Activated CD4-positive, alpha-beta T cell treated with anti-CD3 and anti-CD28 coated beads for 36 hours (primary cell): ENCODE measurements at regions of chr14 and their contacts with region 1.

Region 1: GRCh38 chr14:78254911-78255461 is 84.8 kb downstream of the NRXN3 start:
- DNase-seq: peak; percentile 67
- ATAC-seq: peak; percentile 55
- H3K4me3 Mint-ChIP-seq: no peak overlapping the region
- H3K27ac Mint-ChIP-seq: no peak overlapping the region
- H3K4me1 Mint-ChIP-seq: peaks cover 16% of the 10 kb centered on the region
- H3K27me3 Mint-ChIP-seq: peaks cover 16% of the 10 kb centered on the region

Region 2: DNA sequence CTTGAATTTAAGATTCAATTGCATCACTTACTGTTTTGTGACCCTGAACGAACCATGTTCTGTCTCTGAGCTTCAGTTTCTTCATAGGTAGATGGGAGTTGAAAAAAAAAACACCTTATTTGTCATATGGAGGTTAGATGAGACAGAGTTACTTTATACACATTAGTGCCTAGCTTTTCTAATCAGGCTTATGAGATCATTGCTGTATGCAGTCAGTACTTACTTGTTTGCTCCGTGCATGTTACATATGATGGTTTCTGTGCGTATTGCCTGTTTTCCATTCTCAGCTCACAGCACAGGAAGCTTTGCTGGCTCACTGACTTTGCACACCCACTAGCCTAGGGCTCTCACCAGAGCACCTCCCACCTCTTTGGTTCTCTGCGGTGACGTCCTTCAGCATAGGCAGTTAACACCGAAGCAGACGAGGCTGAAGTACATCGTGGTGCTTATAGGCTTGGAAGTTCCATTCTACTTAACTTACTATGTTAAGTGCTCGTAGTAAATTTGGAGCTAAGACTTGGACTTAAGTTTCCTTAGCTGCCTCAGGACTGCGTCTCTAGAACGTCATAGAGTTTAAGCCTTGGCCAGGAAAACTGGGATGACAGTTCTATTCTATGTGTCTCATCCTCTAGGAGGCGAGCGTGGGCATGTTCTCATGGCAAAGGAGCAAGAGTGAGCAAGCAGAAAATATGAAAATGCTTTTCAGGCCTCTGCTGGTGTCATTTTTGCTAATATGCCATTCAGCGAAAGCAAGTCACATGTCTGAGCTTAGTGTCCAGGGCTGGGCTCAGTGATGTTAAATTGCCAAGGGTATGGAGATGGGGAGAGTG is 27.5 kb before region 1 on chr14:
- CTCF ChIA-PET with region 1: no interaction called
- POLR2A ChIA-PET with region 1: no interaction called
- intact Hi-C with region 1: loop called in 1 of 2 experiments (anchors 1 kb)
- DNase-seq: no peak
- ATAC-seq: no peak
- H3K4me3 Mint-ChIP-seq: no peak overlapping the region
- H3K27ac Mint-ChIP-seq: no peak overlapping the region
- H3K4me1 Mint-ChIP-seq: peaks cover 11% of the 10 kb centered on the region
- H3K27me3 Mint-ChIP-seq: peaks cover 15% of the 10 kb centered on the region

Region 3: GRCh38 chr14:78278464-78279250 is 23.7 kb after region 1 on chr14:
- CTCF ChIA-PET with region 1: no interaction called
- POLR2A ChIA-PET with region 1: no interaction called
- intact Hi-C with region 1: loop called in 1 of 2 experiments (anchors 2 kb)
- DNase-seq: no peak
- ATAC-seq: no peak
- H3K4me3 Mint-ChIP-seq: no peak overlapping the region
- H3K27ac Mint-ChIP-seq: no peak overlapping the region
- H3K4me1 Mint-ChIP-seq: peaks cover 3% of the 10 kb centered on the region
- H3K27me3 Mint-ChIP-seq: peaks cover 15% of the 10 kb centered on the region

Region 4: DNA sequence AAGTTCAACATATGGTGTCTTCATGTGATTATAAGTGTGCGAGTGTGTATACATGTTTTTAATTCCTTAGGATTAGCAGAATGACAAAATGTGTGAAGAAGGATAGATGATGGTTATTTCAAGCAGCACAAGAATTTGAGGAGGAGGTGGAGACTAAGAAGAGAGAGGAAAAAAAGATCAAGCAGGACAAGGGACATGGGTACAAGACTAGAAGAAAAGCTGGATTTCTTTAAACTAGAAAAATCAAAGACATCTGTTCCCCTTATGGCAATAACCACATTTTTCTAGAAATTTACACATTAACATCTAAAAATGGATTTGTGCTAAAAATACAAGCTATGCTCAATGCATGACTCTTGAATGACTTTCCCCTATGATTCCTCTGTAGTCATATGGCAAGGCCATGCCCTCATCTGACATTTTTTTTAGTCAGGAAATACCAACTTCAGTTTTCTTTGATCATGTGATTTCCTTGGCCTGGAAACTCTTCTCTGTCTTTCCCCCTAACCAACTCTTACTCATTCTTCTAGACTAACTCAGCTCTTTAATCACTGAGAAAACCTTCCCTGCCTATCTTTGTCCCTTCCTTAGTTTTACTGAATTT is 351.0 kb after region 1 on chr14:
- CTCF ChIA-PET with region 1: no interaction called
- POLR2A ChIA-PET with region 1: no interaction called
- intact Hi-C with region 1: loop called in 1 of 2 experiments (anchors 10 kb)
- DNase-seq: no peak
- ATAC-seq: peak; percentile 86
- H3K4me3 Mint-ChIP-seq: no peak overlapping the region
- H3K27ac Mint-ChIP-seq: no peak overlapping the region
- H3K4me1 Mint-ChIP-seq: peaks cover 10% of the 10 kb centered on the region
- H3K27me3 Mint-ChIP-seq: peaks cover 17% of the 10 kb centered on the region